CD4-positive, alpha-beta memory T cell (primary cell): ENCODE measurements at regions of chr6 and their contacts with region 1.

Region 1: DNA sequence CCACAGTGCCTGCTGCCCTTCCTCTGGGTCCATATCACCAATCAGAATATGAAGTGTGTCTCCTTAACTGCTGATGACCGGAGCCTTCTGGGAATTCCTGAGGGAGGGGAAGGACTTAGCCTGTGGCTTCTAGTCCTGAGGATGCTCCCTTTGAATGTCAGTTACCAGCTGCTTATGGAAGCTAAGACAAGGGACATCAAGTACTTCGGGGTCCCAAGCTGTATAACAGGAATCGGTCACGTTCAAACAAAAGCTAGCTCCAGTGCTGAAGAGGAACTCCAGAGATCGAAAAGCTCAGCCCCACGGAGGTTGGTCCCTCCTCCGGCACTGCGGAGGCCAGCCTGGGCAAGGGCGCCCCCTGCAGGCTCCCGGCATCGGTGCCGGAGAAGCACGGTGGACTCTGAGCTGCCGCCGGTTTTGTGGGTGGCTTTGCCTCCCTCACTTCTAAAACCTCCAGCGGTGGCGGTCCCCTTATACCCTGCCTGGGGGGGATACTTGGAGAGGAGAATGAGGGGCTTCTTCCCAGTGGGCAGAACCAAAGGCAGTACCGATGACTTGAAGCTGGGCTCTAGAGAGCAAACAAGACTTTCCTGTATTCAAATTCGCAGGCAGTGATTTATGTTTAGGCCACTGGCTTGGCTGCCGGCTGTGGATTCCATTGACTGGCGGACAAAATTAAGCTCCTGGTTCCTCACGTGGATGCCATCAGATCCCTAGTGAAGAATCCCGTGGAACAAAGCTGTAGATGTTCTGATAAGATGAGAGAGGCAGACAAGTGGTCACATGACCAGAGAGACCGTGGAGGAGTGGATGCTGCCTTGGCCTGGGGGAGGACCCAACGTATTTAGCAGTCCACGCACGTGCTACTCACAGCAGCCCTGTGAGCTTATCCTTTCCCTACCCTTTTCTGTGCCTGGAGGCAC is 16.2 kb upstream of the UBR2 start:
- DNase-seq: peak; percentile 73 to 85 (median 82)
- H3K4me3 ChIP-seq: peak overlapping the region in 1 of 2 donors; percentile 18
- H3K4me3 Mint-ChIP-seq: peak overlapping the region; percentile 59 to 76 (median 74)
- H3K27ac ChIP-seq: no peak overlapping the region
- H3K27ac Mint-ChIP-seq: peak overlapping the region in 6 of 7 donors; percentile 41 to 93 (median 56)
- H3K4me1 ChIP-seq: peaks cover 9% of the 10 kb centered on the region
- H3K4me1 Mint-ChIP-seq: peaks cover 5 to 13% (median 9%) of the 10 kb centered on the region in 4 donors
- H3K27me3 ChIP-seq: no peaks in the 10 kb centered on the region
- H3K27me3 Mint-ChIP-seq: peaks cover 2 to 4% of the 10 kb centered on the region in 2 donors

Region 2: DNA sequence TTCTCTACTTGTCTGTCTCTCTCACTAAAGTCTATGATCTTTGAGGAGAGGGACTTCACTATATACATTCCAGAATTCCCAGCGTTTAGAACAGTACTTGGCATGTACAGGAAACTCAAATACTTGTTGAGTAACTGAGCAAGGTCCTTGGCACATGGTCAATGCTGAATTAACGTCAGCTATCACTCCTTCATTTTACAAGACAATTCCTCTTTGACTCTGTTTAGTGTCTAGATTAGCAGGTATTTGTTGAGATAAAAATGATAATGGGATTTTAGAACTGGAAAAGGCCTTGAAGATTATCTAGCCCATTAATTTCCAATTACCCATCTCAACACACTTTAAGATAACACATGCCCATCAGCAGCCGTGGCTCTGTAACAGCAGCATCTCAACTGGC is 346.3 kb before region 1 on chr6:
- CTCF ChIA-PET with region 1: interaction called, 12 read pairs
- POLR2A ChIA-PET with region 1: no interaction called
- intact Hi-C with region 1: no loop called
- DNase-seq: no peak
- H3K4me3 ChIP-seq: no peak overlapping the region
- H3K4me3 Mint-ChIP-seq: no peak overlapping the region
- H3K27ac ChIP-seq: no peak overlapping the region
- H3K27ac Mint-ChIP-seq: peak overlapping the region in 1 of 7 donors; percentile 47
- H3K4me1 ChIP-seq: no peaks in the 10 kb centered on the region
- H3K4me1 Mint-ChIP-seq: peaks cover 0 to 8% (median 0%) of the 10 kb centered on the region in 4 donors
- H3K27me3 ChIP-seq: no peaks in the 10 kb centered on the region
- H3K27me3 Mint-ChIP-seq: no peaks in the 10 kb centered on the region

Region 3: DNA sequence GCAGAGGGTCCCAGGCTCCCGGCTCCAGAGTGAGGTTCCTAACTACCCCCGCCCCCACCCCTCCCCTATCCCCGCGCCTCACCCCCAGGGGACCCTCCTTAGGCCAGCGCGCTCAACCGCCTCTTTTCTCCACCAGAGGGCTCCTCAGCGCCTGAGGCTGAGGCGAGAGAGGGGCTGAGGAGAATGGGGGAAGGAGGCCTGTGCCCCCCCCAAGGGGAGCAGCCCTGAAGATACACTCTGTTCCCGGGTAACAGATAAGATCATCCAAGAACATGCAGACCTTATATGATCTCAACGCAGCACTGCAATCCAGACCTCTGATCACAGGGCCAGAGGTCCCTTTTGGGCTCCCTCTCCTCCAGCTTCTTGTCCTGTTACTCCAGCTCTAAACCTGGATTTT is 286.7 kb before region 1 on chr6:
- CTCF ChIA-PET with region 1: interaction called, 38 read pairs
- POLR2A ChIA-PET with region 1: interaction called, 4 read pairs
- intact Hi-C with region 1: loop called (anchors 1 kb)
- DNase-seq: peak in 3 of 5 donors; percentile 11 to 25 (median 15)
- H3K4me3 ChIP-seq: no peak overlapping the region
- H3K4me3 Mint-ChIP-seq: peak overlapping the region in 1 of 8 donors; percentile 29
- H3K27ac ChIP-seq: no peak overlapping the region
- H3K27ac Mint-ChIP-seq: peak overlapping the region in 1 of 7 donors; percentile 82
- H3K4me1 ChIP-seq: no peaks in the 10 kb centered on the region
- H3K4me1 Mint-ChIP-seq: peaks cover 0 to 8% (median 6%) of the 10 kb centered on the region in 4 donors
- H3K27me3 ChIP-seq: no peaks in the 10 kb centered on the region
- H3K27me3 Mint-ChIP-seq: no peaks in the 10 kb centered on the region

Region 4: DNA sequence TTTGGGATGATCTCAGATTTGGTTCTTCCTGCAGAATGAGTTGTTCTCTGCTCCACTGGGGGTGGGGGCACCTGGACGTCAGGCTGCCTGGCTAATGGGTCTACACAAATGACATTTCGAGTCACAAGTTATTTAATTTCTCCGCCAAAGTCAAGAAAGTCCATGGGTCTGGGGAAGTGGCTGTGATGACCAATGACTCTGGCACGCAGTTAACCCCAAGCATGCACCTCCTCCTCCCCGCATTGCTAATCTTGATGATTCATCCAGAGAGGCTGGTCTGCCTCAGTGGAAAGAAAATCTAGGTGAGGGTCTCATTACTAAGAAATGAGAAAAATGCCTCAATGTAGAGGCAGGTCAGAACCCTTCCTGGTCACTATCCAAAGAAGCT is 231.7 kb before region 1 on chr6:
- CTCF ChIA-PET with region 1: interaction called, 62 read pairs
- POLR2A ChIA-PET with region 1: no interaction called
- intact Hi-C with region 1: no loop called
- DNase-seq: no peak
- H3K4me3 ChIP-seq: no peak overlapping the region
- H3K4me3 Mint-ChIP-seq: no peak overlapping the region
- H3K27ac ChIP-seq: no peak overlapping the region
- H3K27ac Mint-ChIP-seq: peak overlapping the region in 4 of 7 donors; percentile 37 to 72 (median 57)
- H3K4me1 ChIP-seq: peaks cover 36% of the 10 kb centered on the region
- H3K4me1 Mint-ChIP-seq: peaks cover 45 to 63% (median 56%) of the 10 kb centered on the region in 4 donors
- H3K27me3 ChIP-seq: no peaks in the 10 kb centered on the region
- H3K27me3 Mint-ChIP-seq: no peaks in the 10 kb centered on the region

Region 5: DNA sequence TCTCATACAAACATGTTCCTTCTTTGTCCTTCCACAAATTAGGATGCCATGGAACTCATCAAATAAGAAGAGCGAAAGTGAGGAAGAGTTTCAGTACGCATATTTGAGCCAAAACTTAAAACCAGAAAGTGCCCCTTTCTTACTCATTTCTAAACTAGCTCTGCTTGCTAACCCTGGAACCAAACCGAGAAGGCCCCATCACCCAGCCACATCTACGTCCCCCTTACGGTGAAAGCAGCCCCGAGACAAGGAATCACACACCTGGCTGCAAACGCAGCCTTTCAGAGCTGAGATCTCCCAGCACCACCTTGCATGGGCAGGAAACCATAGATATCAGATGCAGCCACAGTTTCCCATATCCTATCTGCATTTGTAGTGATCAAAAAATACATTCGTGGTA is 124.4 kb before region 1 on chr6:
- CTCF ChIA-PET with region 1: interaction called, 15 read pairs
- POLR2A ChIA-PET with region 1: no interaction called
- intact Hi-C with region 1: no loop called
- DNase-seq: peak in 2 of 5 donors; percentile 22 to 45
- H3K4me3 ChIP-seq: peak overlapping the region in 1 of 2 donors; percentile 59
- H3K4me3 Mint-ChIP-seq: peak overlapping the region; percentile 84 to 96 (median 88)
- H3K27ac ChIP-seq: no peak overlapping the region
- H3K27ac Mint-ChIP-seq: peak overlapping the region; percentile 21 to 92 (median 85)
- H3K4me1 ChIP-seq: peaks cover 70% of the 10 kb centered on the region
- H3K4me1 Mint-ChIP-seq: peaks cover 50 to 81% (median 65%) of the 10 kb centered on the region in 4 donors
- H3K27me3 ChIP-seq: no peaks in the 10 kb centered on the region
- H3K27me3 Mint-ChIP-seq: no peaks in the 10 kb centered on the region

Region 6: GRCh38 chr6:42563697-42564505 is 16.2 kb after region 1 on chr6 and contains the start of gene UBR2:
- CTCF ChIA-PET with region 1: interaction called, 106 read pairs
- POLR2A ChIA-PET with region 1: interaction called, 11 read pairs
- intact Hi-C with region 1: no loop called
- DNase-seq: peak; percentile 92 to 98 (median 95)
- H3K4me3 ChIP-seq: peak within 1 kb of the TSS; percentile 98 to 100
- H3K4me3 Mint-ChIP-seq: peak within 1 kb of the TSS; percentile 92 to 100 (median 98)
- H3K27ac ChIP-seq: peak within 1 kb of the TSS; percentile 94
- H3K27ac Mint-ChIP-seq: peak within 1 kb of the TSS; percentile 90 to 98 (median 96)
- H3K4me1 ChIP-seq: peaks cover 33% of the 10 kb centered on the region
- H3K4me1 Mint-ChIP-seq: peaks cover 21 to 43% (median 28%) of the 10 kb centered on the region in 4 donors
- H3K27me3 ChIP-seq: no peaks in the 10 kb centered on the region
- H3K27me3 Mint-ChIP-seq: peaks cover 0 to 1% of the 10 kb centered on the region in 2 donors
- total RNA-seq, gene UBR2: 55.0 to 55.7 TPM

Region 7: GRCh38 chr6:42735976-42736375 is 188.3 kb after region 1 on chr6:
- CTCF ChIA-PET with region 1: no interaction called
- POLR2A ChIA-PET with region 1: no interaction called
- intact Hi-C with region 1: no loop called
- DNase-seq: no peak
- H3K4me3 ChIP-seq: no peak overlapping the region
- H3K4me3 Mint-ChIP-seq: no peak overlapping the region
- H3K27ac ChIP-seq: no peak overlapping the region
- H3K27ac Mint-ChIP-seq: no peak overlapping the region
- H3K4me1 ChIP-seq: no peaks in the 10 kb centered on the region
- H3K4me1 Mint-ChIP-seq: no peaks in the 10 kb centered on the region
- H3K27me3 ChIP-seq: no peaks in the 10 kb centered on the region
- H3K27me3 Mint-ChIP-seq: no peaks in the 10 kb centered on the region